Activated CD4-positive, alpha-beta memory T cell treated with anti-CD3 and anti-CD28 coated beads for 36 hours (primary cell): ENCODE measurements at regions of chr1 and their contacts with region 1.

Region 1: GRCh38 chr1:11645670-11646265 is 8.5 kb downstream of the FBXO2 start:
- DNase-seq: peak; percentile 88
- H3K4me3 Mint-ChIP-seq: no peak overlapping the region
- H3K27ac Mint-ChIP-seq: no peak overlapping the region
- H3K4me1 Mint-ChIP-seq: peaks cover 11% of the 10 kb centered on the region
- H3K27me3 Mint-ChIP-seq: no peaks in the 10 kb centered on the region

Region 2: DNA sequence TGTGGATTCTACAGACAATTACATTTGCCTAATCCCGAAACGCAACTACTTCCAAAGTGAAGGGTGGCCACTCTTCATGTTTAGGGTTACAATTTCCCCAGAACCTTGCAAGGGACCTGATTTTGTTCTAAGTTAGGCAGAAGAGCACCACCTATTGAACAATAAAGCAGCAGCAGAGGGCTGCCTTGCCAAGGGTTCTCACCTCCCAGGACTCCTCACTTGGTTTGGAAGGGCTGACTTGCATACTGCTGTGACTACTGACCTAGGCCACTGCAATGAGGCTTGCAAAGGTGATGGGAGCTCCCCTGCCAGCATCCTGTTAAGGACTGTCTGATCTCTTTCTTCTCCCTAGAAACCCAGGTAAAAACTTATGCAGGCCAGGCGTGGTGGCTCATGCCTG is 397.6 kb before region 1 on chr1:
- CTCF ChIA-PET with region 1: interaction called, 75 read pairs
- POLR2A ChIA-PET with region 1: no interaction called
- intact Hi-C with region 1: no loop called
- DNase-seq: no peak
- H3K4me3 Mint-ChIP-seq: no peak overlapping the region
- H3K27ac Mint-ChIP-seq: no peak overlapping the region
- H3K4me1 Mint-ChIP-seq: peaks cover 14% of the 10 kb centered on the region
- H3K27me3 Mint-ChIP-seq: no peaks in the 10 kb centered on the region

Region 3: DNA sequence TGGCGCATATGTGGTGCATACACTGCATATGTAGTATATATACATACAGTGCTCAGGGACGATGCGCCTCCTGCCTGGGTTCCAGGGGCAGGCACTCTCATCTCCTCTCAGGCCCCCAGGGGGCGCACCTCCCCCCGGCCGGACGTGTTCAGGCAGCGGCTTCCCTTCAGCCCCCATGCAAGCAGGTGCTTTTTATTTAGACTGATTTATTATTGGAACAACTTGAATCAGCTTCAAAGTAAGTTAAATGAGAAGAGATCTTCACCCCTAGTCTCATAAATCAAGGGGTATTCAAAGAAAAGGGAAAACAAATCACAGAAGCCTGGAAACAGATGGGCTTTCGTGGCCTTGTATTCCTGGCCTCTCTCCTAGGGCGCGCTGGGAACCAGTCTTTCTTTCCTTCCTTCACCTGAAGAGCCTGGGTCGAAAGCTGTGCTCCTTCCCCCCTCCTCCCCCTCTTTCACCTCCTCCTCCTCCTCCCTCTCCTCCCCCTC is 308.1 kb before region 1 on chr1:
- CTCF ChIA-PET with region 1: interaction called, 11 read pairs
- POLR2A ChIA-PET with region 1: no interaction called
- intact Hi-C with region 1: loop called (anchors 1 kb)
- DNase-seq: peak; percentile 77
- H3K4me3 Mint-ChIP-seq: no peak overlapping the region
- H3K27ac Mint-ChIP-seq: no peak overlapping the region
- H3K4me1 Mint-ChIP-seq: peaks cover 5% of the 10 kb centered on the region
- H3K27me3 Mint-ChIP-seq: peaks cover 17% of the 10 kb centered on the region

Region 4: GRCh38 chr1:11634365-11635192 is 11.2 kb before region 1 on chr1:
- CTCF ChIA-PET with region 1: interaction called, 11 read pairs
- POLR2A ChIA-PET with region 1: no interaction called
- intact Hi-C with region 1: no loop called
- DNase-seq: no peak
- H3K4me3 Mint-ChIP-seq: no peak overlapping the region
- H3K27ac Mint-ChIP-seq: no peak overlapping the region
- H3K4me1 Mint-ChIP-seq: no peaks in the 10 kb centered on the region
- H3K27me3 Mint-ChIP-seq: peaks cover 7% of the 10 kb centered on the region

Region 5: DNA sequence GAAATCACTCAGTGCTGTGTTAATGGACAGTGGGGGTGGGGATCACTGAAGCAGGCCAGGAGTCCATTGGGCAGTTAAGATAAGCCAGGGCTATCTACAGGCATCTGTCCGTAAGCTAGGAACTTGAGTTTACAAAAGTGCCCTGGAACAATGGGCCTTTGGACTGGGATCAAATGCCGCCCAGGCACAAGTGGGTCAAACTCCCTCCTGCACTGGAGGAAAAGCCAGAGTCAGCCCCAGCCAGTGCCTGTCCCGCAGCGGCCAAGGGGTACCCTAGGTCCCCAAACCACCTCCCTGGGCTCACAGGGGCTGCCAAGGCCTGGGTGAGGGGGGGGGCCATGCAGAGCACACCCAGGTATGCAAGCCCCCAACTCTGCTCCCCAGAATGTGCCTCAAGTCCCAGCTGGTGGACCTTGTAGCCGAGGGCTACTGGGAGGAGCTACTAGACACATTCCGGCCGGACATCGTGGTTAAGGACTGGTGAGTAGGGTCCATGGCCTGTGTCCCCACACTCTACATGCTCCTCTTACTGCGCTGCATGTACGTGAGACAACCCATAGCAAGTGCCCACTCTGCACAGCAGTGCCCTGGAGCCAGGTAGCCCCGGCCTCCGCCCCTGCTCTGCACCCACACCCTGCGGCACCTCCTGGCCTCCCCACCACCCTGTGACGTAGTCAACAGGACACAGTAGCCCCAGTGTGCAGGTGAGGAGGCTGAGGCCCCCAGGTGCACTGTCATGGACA is 25.9 kb after region 1 on chr1:
- CTCF ChIA-PET with region 1: interaction called, 59 read pairs
- POLR2A ChIA-PET with region 1: no interaction called
- intact Hi-C with region 1: no loop called
- DNase-seq: no peak
- H3K4me3 Mint-ChIP-seq: no peak overlapping the region
- H3K27ac Mint-ChIP-seq: no peak overlapping the region
- H3K4me1 Mint-ChIP-seq: peaks cover 3% of the 10 kb centered on the region
- H3K27me3 Mint-ChIP-seq: no peaks in the 10 kb centered on the region

Region 6: GRCh38 chr1:11719313-11720032 is 73.7 kb after region 1 on chr1:
- CTCF ChIA-PET with region 1: interaction called, 100 read pairs
- POLR2A ChIA-PET with region 1: interaction called, 12 read pairs
- intact Hi-C with region 1: loop called (anchors 1 kb)
- DNase-seq: peak; percentile 88
- H3K4me3 Mint-ChIP-seq: peak overlapping the region; percentile 73
- H3K27ac Mint-ChIP-seq: peak overlapping the region; percentile 68
- H3K4me1 Mint-ChIP-seq: peaks cover 12% of the 10 kb centered on the region
- H3K27me3 Mint-ChIP-seq: no peaks in the 10 kb centered on the region

Region 7: DNA sequence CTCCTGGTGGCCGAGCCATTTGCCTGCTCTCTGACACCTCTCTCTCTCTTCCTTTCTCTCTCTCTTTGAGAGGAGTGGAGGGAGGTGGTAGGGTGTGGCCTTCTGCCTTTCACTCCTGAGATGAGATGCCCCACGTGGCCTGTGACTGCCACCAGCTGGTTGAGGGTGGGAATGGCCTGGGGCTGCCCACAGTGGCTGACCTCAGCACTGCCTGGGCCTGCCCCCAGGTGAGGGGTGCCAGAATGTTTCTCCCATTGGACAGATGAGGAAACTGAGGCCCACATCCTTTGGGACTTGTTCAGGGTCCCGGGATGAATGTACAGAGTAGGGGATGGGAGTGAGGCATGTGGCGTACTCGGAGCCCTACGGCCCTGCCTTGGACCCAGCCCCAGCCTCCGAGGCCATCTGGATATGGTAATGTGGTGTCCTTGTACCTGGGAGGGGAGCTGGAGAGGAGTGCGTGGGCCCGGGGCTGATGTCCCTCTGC is 103.5 kb after region 1 on chr1:
- CTCF ChIA-PET with region 1: interaction called, 14 read pairs
- POLR2A ChIA-PET with region 1: no interaction called
- intact Hi-C with region 1: loop called (anchors 1 kb)
- DNase-seq: peak; percentile 75
- H3K4me3 Mint-ChIP-seq: no peak overlapping the region
- H3K27ac Mint-ChIP-seq: peak overlapping the region; percentile 48
- H3K4me1 Mint-ChIP-seq: peaks cover 18% of the 10 kb centered on the region
- H3K27me3 Mint-ChIP-seq: no peaks in the 10 kb centered on the region